CD4-positive, alpha-beta T cell (primary cell): ENCODE measurements at regions of chr11 and their contacts with region 1.

Region 1: GRCh38 chr11:10322830-10323792 is 18.2 kb downstream of the ADM start:
- DNase-seq: peak in 6 of 14 experiments; percentile 23 to 78 (median 47)
- ATAC-seq: peak; percentile 91
- H3K4me3 ChIP-seq: no peak overlapping the region
- H3K4me3 Mint-ChIP-seq: no peak overlapping the region
- H3K27ac ChIP-seq: no peak overlapping the region
- H3K27ac Mint-ChIP-seq: no peak overlapping the region
- H3K4me1 ChIP-seq: peaks cover 3% of the 10 kb centered on the region
- H3K4me1 Mint-ChIP-seq: no peaks in the 10 kb centered on the region
- H3K27me3 ChIP-seq: no peaks in the 10 kb centered on the region
- H3K27me3 Mint-ChIP-seq: peaks cover 4% of the 10 kb centered on the region
- CTCF ChIP-seq: peak; percentile 80

Region 2: GRCh38 chr11:9757809-9758636 is 565.1 kb before region 1 on chr11:
- CTCF ChIA-PET with region 1: no interaction called
- POLR2A ChIA-PET with region 1: no interaction called
- intact Hi-C with region 1: loop called (anchors 1 kb)
- DNase-seq: peak; percentile 83 to 97 (median 89)
- ATAC-seq: peak; percentile 81
- H3K4me3 ChIP-seq: peak overlapping the region; percentile 75
- H3K4me3 Mint-ChIP-seq: peak overlapping the region; percentile 88
- H3K27ac ChIP-seq: no peak overlapping the region
- H3K27ac Mint-ChIP-seq: peak overlapping the region; percentile 79
- H3K4me1 ChIP-seq: peaks cover 21% of the 10 kb centered on the region
- H3K4me1 Mint-ChIP-seq: peaks cover 17% of the 10 kb centered on the region
- H3K27me3 ChIP-seq: no peaks in the 10 kb centered on the region
- H3K27me3 Mint-ChIP-seq: no peaks in the 10 kb centered on the region
- CTCF ChIP-seq: peak; percentile 62

Region 3: DNA sequence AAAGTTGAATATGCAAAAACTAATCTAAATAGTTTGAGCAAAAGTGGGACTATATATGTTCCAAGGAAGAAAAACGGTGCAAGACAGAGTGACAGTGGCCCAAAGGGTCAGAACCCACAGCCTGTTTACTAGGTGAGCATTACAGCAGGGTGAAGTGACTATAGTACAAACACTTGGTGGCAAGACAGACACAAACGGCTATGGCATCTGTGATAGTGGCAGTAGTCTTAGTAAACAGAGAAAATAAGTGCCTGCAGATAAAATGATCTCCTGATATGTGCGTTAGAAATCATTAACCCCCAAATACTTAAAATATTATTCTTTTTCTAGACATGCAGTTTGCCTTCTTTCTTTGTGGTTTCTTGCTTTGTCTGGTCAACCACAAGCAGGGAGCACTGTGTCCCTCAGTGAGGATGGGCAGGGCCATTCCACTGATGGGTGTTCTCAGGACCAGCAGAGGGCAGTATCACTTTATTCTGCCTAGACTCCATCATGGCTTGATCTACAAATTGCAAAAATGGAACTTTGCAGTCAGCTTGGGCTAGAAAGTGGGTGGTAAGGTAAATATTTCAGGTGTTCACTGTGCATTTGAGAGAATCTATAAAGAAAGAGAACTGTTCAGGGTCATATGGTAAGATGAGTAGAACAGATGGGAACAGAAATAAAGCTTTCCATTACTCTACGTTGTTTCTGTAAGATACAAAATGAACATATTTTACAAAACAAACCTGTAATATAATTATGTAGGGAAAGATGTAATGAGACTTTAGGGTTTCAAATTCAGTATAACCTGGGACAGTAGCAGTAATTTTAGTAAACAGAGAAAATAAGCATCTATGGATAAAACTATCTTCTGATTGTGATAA is 461.0 kb before region 1 on chr11:
- CTCF ChIA-PET with region 1: no interaction called
- POLR2A ChIA-PET with region 1: no interaction called
- intact Hi-C with region 1: loop called (anchors 1 to 2 kb)
- DNase-seq: peak in 11 of 14 experiments; percentile 3 to 71 (median 13)
- ATAC-seq: peak; percentile 61
- H3K4me3 ChIP-seq: no peak overlapping the region
- H3K4me3 Mint-ChIP-seq: no peak overlapping the region
- H3K27ac ChIP-seq: no peak overlapping the region
- H3K27ac Mint-ChIP-seq: no peak overlapping the region
- H3K4me1 ChIP-seq: no peaks in the 10 kb centered on the region
- H3K4me1 Mint-ChIP-seq: peaks cover 10% of the 10 kb centered on the region
- H3K27me3 ChIP-seq: no peaks in the 10 kb centered on the region
- H3K27me3 Mint-ChIP-seq: no peaks in the 10 kb centered on the region
- CTCF ChIP-seq: peak; percentile 55

Region 4: GRCh38 chr11:9972989-9973388 is 350.1 kb before region 1 on chr11:
- CTCF ChIA-PET with region 1: no interaction called
- POLR2A ChIA-PET with region 1: no interaction called
- intact Hi-C with region 1: loop called in 1 of 2 experiments (anchors 10 kb)
- DNase-seq: peak in 6 of 14 experiments; percentile 2 to 51 (median 30)
- ATAC-seq: no peak
- H3K4me3 ChIP-seq: no peak overlapping the region
- H3K4me3 Mint-ChIP-seq: no peak overlapping the region
- H3K27ac ChIP-seq: no peak overlapping the region
- H3K27ac Mint-ChIP-seq: no peak overlapping the region
- H3K4me1 ChIP-seq: no peaks in the 10 kb centered on the region
- H3K4me1 Mint-ChIP-seq: no peaks in the 10 kb centered on the region
- H3K27me3 ChIP-seq: no peaks in the 10 kb centered on the region
- H3K27me3 Mint-ChIP-seq: no peaks in the 10 kb centered on the region
- CTCF ChIP-seq: peak; percentile 46

Region 5: GRCh38 chr11:10208131-10208575 is 115.0 kb before region 1 on chr11:
- CTCF ChIA-PET with region 1: interaction called, 6 read pairs
- POLR2A ChIA-PET with region 1: no interaction called
- intact Hi-C with region 1: loop called (anchors 1 to 5 kb)
- DNase-seq: peak in 3 of 14 experiments; percentile 57 to 71 (median 70)
- ATAC-seq: peak; percentile 66
- H3K4me3 ChIP-seq: no peak overlapping the region
- H3K4me3 Mint-ChIP-seq: no peak overlapping the region
- H3K27ac ChIP-seq: no peak overlapping the region
- H3K27ac Mint-ChIP-seq: no peak overlapping the region
- H3K4me1 ChIP-seq: no peaks in the 10 kb centered on the region
- H3K4me1 Mint-ChIP-seq: no peaks in the 10 kb centered on the region
- H3K27me3 ChIP-seq: no peaks in the 10 kb centered on the region
- H3K27me3 Mint-ChIP-seq: no peaks in the 10 kb centered on the region
- CTCF ChIP-seq: peak; percentile 77